ENCODE measurements at regions of chr3 and their contacts with region 1.

Region 1: DNA sequence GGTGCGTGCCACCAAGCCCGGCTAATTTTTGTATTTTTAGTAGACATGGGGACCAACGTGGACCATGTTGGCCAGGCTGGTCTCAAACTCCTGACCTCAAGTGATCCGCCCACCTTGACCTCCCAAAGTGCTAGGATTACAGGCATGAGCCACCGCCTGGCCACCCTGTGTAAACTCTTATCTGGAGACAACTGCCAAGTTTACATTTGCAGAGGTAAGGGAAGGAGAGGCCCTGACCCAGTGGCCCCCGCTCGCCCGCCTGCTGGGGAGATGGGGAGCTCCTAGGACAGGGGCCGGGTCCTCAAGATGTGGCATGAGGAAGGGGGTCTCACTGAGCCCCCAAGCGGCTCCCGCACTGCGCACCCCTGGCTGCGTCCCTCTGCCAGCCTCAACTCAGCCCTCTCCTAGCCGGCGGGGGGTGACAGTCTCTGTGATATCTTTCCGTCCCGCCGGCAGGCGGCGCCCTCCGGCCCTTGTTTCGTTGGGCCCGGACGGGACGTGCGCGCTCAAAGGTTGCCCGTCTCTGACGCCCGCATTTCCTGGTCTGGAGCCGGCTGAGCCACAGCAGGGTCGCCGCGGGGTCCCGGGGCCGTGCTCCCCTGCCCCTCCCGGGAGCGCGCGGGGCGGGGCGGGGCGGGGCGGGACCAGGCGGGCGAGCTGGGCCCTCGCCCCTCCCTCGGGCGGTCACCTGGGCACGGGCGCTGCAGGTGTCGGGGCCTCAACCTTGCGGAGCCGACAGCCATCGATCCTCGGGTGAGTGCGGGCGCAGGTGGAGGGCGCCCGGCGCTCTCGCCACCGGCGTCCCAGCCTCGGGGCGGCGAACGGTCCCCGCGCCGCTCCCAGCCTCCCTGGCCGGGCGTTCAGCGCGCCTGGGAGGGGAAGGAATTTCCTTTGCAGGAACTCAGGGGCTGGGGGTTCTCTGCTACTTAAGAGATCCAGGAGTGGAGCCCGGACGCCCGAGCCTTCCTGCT is at the start of gene GPR160:
- DNase-seq: peak; percentile 64
- ATAC-seq: peak; percentile 92
- H3K4me3 ChIP-seq: peak within 1 kb of the TSS; percentile 60 to 72
- H3K27ac ChIP-seq: peak within 1 kb of the TSS; percentile 39; the same call in 1 of the 2 replicates
- H3K4me1 ChIP-seq: peaks cover 4 to 16% of the 10 kb centered on the region in 2 experiments; a peak in 2 of 4 replicates
- H3K27me3 ChIP-seq: no peaks in the 10 kb centered on the region
- CTCF ChIP-seq: peak; percentile 78 to 81 (median 78)
- POLR2A ChIP-seq: no peak
- RAD21 ChIP-seq: peak; percentile 64
- total RNA-seq, gene GPR160: 9.9 TPM

Region 2: DNA sequence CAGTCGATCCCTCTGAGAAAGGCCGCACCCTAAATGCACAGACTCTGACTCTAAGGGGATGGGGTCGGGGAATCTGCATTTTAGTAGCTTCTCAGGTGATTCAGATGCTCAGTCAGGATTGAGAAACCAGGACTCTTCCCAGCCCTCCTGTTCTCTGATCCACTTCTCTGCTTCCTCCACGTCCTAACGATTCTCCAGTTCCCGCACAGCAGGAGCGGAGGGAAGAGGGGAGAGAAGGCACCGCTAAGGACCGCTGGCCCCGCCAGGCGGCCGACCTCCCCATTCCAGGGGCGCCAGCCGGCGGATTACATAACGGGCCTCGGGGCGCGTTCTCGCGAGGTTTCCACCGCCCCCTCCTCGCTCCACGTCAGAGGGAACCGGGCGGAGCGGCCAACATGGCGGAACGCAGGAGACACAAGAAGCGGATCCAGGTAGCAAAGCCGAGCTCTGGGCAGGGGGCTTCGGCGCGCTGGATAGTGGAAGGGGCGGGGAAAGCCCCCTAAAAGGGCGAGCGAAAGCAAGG is 71.3 kb before region 1 on chr3 and contains the start of gene SEC62:
- CTCF ChIA-PET with region 1: interaction called, 4 read pairs
- POLR2A ChIA-PET with region 1: no interaction called
- RAD21 ChIA-PET with region 1: no interaction called
- intact Hi-C with region 1: loop called (anchors 1 kb)
- DNase-seq: peak; percentile 73
- ATAC-seq: peak; percentile 94
- H3K4me3 ChIP-seq: peak within 1 kb of the TSS; percentile 68 to 76
- H3K27ac ChIP-seq: peak within 1 kb of the TSS; percentile 53; the same call in 1 of the 2 replicates
- H3K4me1 ChIP-seq: peaks cover 3 to 15% of the 10 kb centered on the region in 2 experiments; a peak in 3 of 4 replicates
- H3K27me3 ChIP-seq: no peaks in the 10 kb centered on the region
- CTCF ChIP-seq: peak in 2 of 3 experiments; percentile 20 to 26; a peak in 2 of 6 replicates
- POLR2A ChIP-seq: peak; percentile 80
- RAD21 ChIP-seq: peak; percentile 42
- total RNA-seq, gene SEC62: 55.4 TPM

Region 3: GRCh38 chr3:169992161-169992560 is 45.6 kb before region 1 on chr3:
- CTCF ChIA-PET with region 1: no interaction called
- POLR2A ChIA-PET with region 1: no interaction called
- RAD21 ChIA-PET with region 1: no interaction called
- intact Hi-C with region 1: no loop called
- DNase-seq: no peak
- ATAC-seq: no peak
- H3K4me3 ChIP-seq: no peak overlapping the region
- H3K27ac ChIP-seq: no peak overlapping the region
- H3K4me1 ChIP-seq: no peaks in the 10 kb centered on the region
- H3K27me3 ChIP-seq: no peaks in the 10 kb centered on the region
- CTCF ChIP-seq: no peak
- POLR2A ChIP-seq: no peak
- RAD21 ChIP-seq: no peak

Region 4: GRCh38 chr3:170211668-170212067 is 173.9 kb after region 1 on chr3:
- CTCF ChIA-PET with region 1: no interaction called
- POLR2A ChIA-PET with region 1: no interaction called
- RAD21 ChIA-PET with region 1: no interaction called
- intact Hi-C with region 1: no loop called
- DNase-seq: no peak
- ATAC-seq: no peak
- H3K4me3 ChIP-seq: no peak overlapping the region
- H3K27ac ChIP-seq: no peak overlapping the region
- H3K4me1 ChIP-seq: no peaks in the 10 kb centered on the region
- H3K27me3 ChIP-seq: no peaks in the 10 kb centered on the region
- CTCF ChIP-seq: no peak
- POLR2A ChIP-seq: no peak
- RAD21 ChIP-seq: no peak

Region 5: DNA sequence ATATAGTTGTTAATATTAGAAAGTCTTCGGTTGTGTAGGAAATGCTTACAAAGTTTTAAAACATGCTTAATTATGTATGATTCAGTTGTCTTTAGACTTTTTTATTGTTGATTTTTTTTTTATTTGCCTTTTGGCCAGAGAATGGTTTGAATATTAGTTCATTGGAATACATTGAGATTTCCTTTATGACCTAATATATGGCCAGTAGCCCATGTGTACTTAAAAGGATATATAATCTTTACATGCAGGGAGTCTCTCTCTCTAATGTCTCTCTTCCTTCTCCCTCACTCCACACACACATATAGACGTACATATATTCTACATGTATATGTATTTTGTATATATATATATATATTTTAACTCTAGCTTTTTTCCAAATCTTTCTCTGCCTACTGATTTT is 252.4 kb after region 1 on chr3:
- CTCF ChIA-PET with region 1: no interaction called
- POLR2A ChIA-PET with region 1: no interaction called
- RAD21 ChIA-PET with region 1: no interaction called
- intact Hi-C with region 1: no loop called
- DNase-seq: no peak
- ATAC-seq: no peak
- H3K4me3 ChIP-seq: no peak overlapping the region
- H3K27ac ChIP-seq: no peak overlapping the region
- H3K4me1 ChIP-seq: no peaks in the 10 kb centered on the region
- H3K27me3 ChIP-seq: no peaks in the 10 kb centered on the region
- CTCF ChIP-seq: no peak
- POLR2A ChIP-seq: no peak
- RAD21 ChIP-seq: no peak

Measured in HCT116 (cell line).